Heart left ventricle (tissue), 16 donors: ENCODE measurements at regions of chr1 and their contacts with region 1.

Region 1: DNA sequence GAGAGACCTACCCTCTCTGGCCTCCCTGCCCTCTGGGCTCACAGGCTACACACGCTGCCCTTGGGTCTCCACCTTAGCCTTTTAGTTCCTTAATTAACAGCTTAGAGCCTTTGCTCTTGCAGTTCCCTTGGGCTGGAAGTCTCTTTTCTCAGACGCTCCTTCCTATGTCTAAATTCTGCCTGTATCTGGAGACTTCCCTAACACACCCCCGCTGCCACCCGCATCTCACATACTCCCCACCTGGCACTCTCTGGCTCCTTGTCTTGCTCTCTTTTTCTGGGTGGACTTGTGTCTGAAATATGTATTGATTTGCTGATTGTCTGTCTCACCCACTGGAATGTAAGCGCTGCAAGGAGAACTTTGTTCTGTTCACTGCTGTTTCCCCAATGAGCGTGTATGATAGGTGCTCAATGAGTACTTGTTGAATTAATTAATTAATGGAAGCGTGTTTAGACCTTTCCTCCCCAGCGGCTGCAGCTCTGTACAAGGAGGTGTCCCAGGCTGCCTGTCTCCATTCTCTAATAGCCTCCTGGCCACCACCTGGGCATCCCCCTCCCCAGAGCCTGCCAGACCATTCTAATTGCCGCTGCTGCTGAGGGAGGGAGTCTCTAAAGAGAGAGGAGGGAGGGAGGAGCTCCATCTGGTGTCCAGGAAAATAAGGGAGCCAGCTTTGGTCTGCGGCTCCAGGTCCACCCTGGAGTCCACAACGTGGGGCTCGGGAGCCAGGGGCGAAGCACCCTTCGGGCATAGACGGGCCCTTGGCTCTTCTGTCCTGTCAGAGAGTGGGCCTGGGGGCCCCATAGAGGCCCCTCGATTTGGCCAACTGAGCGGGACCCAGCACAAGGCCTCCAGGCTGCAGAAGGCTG is 95.4 kb downstream of the RNF220 start:
- DNase-seq: peak in 2 of 5 donors; percentile 16 to 28
- ATAC-seq: peak; percentile 25 to 79 (median 64)
- H3K4me3 ChIP-seq: peak overlapping the region in 5 of 12 donors; percentile 10 to 36 (median 24)
- H3K27ac ChIP-seq: peak overlapping the region in 2 of 12 donors; percentile 26 to 41
- H3K4me1 ChIP-seq: peaks cover 0 to 36% (median 9%) of the 10 kb centered on the region in 12 donors
- H3K27me3 ChIP-seq: peaks cover 0 to 6% (median 0%) of the 10 kb centered on the region in 9 donors
- CTCF ChIP-seq: peak; percentile 29 to 65 (median 52)
- POLR2A ChIP-seq: no peak

Region 2: GRCh38 chr1:44213222-44214112 is 286.9 kb before region 1 on chr1 and contains the start of gene DMAP1:
- intact Hi-C with region 1: loop called in 5 of 10 experiments (anchors 2 to 10 kb)
- DNase-seq: peak; percentile 82 to 91 (median 84)
- ATAC-seq: peak; percentile 80 to 95 (median 90)
- H3K4me3 ChIP-seq: peak within 1 kb of the TSS; percentile 65 to 99 (median 87)
- H3K27ac ChIP-seq: peak within 1 kb of the TSS; percentile 39 to 86 (median 82)
- H3K4me1 ChIP-seq: peaks cover 0 to 23% (median 15%) of the 10 kb centered on the region in 12 donors
- H3K27me3 ChIP-seq: no peaks in the 10 kb centered on the region
- CTCF ChIP-seq: peak in 1 of 12 donors; percentile 8
- POLR2A ChIP-seq: peak in 1 of 2 donors; percentile 58
- total RNA-seq, gene DMAP1: 23.5 to 35.5 (median 27.7) TPM

Region 3: DNA sequence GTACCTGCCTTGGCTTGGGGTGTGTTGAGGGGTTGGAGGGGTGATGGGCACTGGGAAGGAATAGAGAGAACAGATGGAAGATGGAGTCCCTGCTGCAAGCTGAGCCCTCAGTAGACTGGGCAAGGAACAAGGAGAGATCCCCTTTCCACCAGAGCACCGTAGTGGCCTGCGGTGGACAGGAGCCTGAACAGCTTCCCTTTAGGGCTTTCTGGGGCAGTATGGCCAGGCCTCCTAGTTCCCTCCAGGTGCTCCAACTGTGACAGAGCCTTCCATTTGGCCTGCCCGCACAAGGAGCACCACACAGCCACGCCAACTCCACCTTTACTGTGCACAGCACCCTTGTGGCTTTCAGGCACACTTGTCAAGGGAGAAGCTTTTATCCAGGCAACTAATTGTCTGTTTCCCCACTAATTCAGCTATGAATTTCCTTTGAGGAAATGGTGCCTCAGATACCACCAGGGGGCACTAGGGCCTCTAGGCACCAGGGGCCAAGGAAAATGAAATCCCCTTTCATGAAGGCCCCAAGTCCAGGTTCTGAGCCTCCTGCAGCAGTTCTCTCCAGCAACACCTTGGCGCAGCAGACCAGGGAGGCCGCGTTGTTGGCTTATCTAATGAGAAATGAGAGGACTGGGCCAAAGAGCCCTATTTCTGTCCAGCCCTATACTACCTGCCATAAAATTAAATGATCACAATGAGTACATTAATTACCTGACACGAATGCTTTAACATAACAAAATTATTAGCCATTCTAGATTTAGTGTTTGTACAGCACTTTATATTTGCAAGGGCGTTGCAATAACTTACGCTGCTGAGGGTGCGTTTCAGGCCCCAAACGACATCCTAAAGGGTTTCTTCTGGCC is 122.3 kb before region 1 on chr1:
- intact Hi-C with region 1: loop called in 8 of 10 experiments (anchors 1 to 5 kb)
- DNase-seq: peak in 3 of 5 donors; percentile 30 to 50 (median 35)
- ATAC-seq: peak in 1 of 4 donors; percentile 50
- H3K4me3 ChIP-seq: no peak overlapping the region
- H3K27ac ChIP-seq: no peak overlapping the region
- H3K4me1 ChIP-seq: no peaks in the 10 kb centered on the region
- H3K27me3 ChIP-seq: no peaks in the 10 kb centered on the region
- CTCF ChIP-seq: peak; percentile 59 to 85 (median 74)
- POLR2A ChIP-seq: no peak

Region 4: DNA sequence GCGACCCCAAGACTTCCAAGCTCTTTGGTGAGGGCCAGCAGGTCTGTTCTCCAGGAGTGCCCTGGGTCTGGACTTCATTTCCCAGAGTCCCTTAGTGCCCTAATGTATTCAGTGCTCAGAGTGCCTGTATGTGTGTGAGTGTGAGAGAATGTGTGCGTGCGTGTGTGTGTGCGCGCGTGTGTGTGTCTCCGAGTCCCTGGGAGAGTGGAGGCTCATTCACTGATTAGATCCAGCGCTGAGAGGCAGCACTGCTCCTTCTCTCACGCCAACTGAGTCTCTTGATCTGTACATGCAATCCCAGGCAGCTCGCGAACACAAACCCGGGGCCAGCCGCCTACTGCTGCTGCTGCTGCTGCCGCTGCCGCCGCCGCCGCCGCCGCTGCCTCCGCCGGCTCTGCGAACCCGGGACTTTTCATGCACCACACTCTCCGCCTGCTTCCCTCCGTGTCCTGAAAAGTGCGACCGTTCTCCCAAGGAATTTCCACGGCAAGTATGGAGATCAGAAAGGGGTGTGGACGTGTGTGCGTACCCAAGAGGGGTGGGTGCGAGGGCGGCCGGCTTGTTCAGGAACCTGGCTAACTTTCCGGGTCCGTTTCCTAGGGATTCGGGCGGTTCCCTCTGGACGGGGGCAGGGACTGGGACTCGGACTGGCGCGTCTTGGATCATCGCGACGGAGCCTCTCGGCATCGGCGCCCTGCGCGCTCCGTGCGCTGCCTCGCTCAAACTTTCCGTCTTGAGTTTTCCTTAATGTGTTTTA is 95.2 kb before region 1 on chr1 and contains the start of gene RNF220:
- intact Hi-C with region 1: loop called in 2 of 10 experiments (anchors 2 kb)
- DNase-seq: peak; percentile 55 to 74 (median 60)
- ATAC-seq: peak; percentile 82 to 84 (median 83)
- H3K4me3 ChIP-seq: peak within 1 kb of the TSS; percentile 24 to 66 (median 54)
- H3K27ac ChIP-seq: peak within 1 kb of the TSS in 7 of 12 donors; percentile 18 to 71 (median 46)
- H3K4me1 ChIP-seq: peaks cover 10 to 52% (median 27%) of the 10 kb centered on the region in 12 donors
- H3K27me3 ChIP-seq: peaks cover 35 to 94% (median 75%) of the 10 kb centered on the region in 9 donors
- CTCF ChIP-seq: peak in 4 of 12 donors; percentile 10 to 27 (median 16)
- POLR2A ChIP-seq: no peak
- total RNA-seq, gene RNF220: 55.5 to 108 (median 62.4) TPM

Region 5: GRCh38 chr1:44417351-44418021 is 82.9 kb before region 1 on chr1:
- intact Hi-C with region 1: loop called in 6 of 10 experiments (anchors 1 to 5 kb)
- DNase-seq: peak in 4 of 5 donors; percentile 22 to 73 (median 52)
- ATAC-seq: peak in 3 of 4 donors; percentile 85 to 91 (median 87)
- H3K4me3 ChIP-seq: peak overlapping the region; percentile 26 to 58 (median 43)
- H3K27ac ChIP-seq: peak overlapping the region in 5 of 12 donors; percentile 3 to 36 (median 20)
- H3K4me1 ChIP-seq: peaks cover 0 to 31% (median 12%) of the 10 kb centered on the region in 12 donors
- H3K27me3 ChIP-seq: peaks cover 33 to 91% (median 77%) of the 10 kb centered on the region in 9 donors
- CTCF ChIP-seq: no peak
- POLR2A ChIP-seq: no peak

Region 6: DNA sequence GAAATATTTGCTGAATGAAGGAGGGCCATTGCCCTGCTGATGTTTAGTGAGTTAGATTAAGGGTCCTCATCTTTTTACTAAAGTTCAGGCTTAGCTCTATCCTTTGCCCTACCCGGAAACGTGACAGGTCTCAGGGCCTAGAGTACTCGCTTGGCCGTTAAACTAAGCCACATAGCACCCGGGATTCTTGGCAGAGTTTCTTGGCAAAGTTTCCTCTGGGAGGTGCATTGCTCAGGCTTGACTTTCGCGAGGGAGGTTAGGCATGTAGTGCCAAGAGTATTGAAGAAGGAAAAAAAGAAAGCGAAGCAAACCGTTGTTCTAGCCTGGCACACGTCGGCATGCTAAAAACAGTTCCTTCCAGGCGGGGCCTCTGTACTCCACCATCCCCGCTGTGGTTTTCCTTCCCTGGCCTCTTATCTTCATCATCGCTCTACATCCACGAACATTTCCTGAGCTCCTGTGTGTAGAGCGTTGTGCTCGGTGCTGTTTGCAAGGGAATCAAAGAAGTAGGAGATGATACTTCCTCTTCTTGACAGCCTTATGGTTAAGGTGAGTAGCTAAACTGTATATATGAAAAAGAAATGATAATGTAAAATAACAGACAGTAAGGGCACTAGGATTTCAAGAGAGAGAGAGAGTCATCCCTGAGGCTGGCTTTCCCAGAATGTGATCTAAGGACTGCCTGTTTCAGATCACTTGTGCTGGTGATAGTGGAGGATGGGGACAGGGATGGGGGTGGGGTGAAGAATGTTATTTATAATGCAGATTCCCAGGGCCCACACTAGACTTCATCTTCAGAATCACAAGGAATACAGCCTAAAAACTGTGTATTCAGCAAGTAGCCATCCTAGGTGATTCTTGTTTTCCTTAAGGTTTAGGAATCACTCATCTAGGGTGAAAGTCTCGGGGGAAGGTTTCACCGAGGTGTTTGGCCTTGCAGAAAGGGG is 76.5 kb before region 1 on chr1:
- intact Hi-C with region 1: loop called in 5 of 10 experiments (anchors 2 to 5 kb)
- DNase-seq: peak in 4 of 5 donors; percentile 63 to 75 (median 70)
- ATAC-seq: peak; percentile 85 to 96 (median 92)
- H3K4me3 ChIP-seq: peak overlapping the region in 3 of 12 donors; percentile 11 to 17 (median 13)
- H3K27ac ChIP-seq: peak overlapping the region in 10 of 12 donors; percentile 3 to 58 (median 30)
- H3K4me1 ChIP-seq: peaks cover 0 to 38% (median 27%) of the 10 kb centered on the region in 12 donors
- H3K27me3 ChIP-seq: peaks cover 6 to 49% (median 30%) of the 10 kb centered on the region in 9 donors
- CTCF ChIP-seq: no peak
- POLR2A ChIP-seq: no peak

Region 7: GRCh38 chr1:44594871-44595746 is 94.7 kb after region 1 on chr1:
- intact Hi-C with region 1: loop called in 3 of 10 experiments (anchors 5 to 10 kb)
- DNase-seq: peak; percentile 77 to 93 (median 79)
- ATAC-seq: peak; percentile 92 to 96 (median 94)
- H3K4me3 ChIP-seq: no peak overlapping the region
- H3K27ac ChIP-seq: no peak overlapping the region
- H3K4me1 ChIP-seq: peaks cover 0 to 3% (median 0%) of the 10 kb centered on the region in 12 donors
- H3K27me3 ChIP-seq: peaks cover 0 to 11% (median 0%) of the 10 kb centered on the region in 9 donors
- CTCF ChIP-seq: peak in 11 of 12 donors; percentile 88 to 99 (median 98)
- POLR2A ChIP-seq: no peak